Naive thymus-derived CD4-positive, alpha-beta T cell (primary cell): ENCODE measurements at regions of chr12 and their contacts with region 1.

Region 1: GRCh38 chr12:59808317-59808910 is 212.6 kb downstream of the SLC16A7 start:
- DNase-seq: peak in 6 of 9 donors; percentile 16 to 44 (median 34)
- ATAC-seq: peak; percentile 81
- H3K4me3 ChIP-seq: no peak overlapping the region
- H3K4me3 Mint-ChIP-seq: no peak overlapping the region
- H3K27ac ChIP-seq: no peak overlapping the region
- H3K27ac Mint-ChIP-seq: no peak overlapping the region
- H3K4me1 ChIP-seq: no peaks in the 10 kb centered on the region
- H3K4me1 Mint-ChIP-seq: peaks cover 0 to 5% (median 0%) of the 10 kb centered on the region in 7 donors
- H3K27me3 ChIP-seq: no peaks in the 10 kb centered on the region
- H3K27me3 Mint-ChIP-seq: no peaks in the 10 kb centered on the region

Region 2: DNA sequence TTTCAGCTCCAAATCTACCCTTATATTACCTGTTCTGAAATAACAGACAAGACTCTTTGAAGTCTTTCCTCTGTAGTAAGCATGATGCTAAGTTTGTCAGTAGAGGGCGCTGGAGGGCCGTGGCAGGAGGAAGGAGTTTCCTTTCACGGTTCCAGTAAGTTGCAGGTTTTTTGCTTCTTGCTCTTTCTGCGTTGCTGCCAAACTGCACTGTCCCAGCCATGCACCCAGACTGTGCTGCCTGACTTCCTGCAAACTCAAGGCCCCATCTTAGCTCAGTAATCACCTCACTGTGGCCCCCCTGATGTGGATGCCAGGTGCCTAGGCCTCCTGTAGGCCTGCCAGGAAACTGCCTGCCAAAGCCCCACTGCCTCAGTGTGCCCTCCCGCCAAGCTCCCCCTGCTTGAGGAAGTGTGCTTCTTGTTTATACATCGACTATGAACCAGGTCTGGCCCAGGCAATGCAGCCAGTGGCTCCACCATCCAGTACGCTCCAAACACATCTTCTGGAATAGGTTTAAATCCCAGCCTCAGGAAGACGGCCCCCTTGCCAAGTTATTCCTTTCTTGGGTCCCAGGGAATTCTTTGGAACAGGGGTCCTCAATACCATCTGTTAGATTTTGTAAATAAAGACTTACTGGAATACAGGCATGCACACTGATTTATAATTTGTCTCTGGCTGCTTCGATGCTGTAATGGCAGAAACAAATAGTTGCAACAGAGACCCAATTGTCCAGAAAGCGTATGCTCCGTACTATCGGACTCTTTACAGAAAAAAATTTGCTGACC is 694.4 kb before region 1 on chr12:
- CTCF ChIA-PET with region 1: no interaction called
- POLR2A ChIA-PET with region 1: no interaction called
- intact Hi-C with region 1: no loop called
- DNase-seq: peak in 4 of 9 donors; percentile 1 to 54 (median 8)
- ATAC-seq: no peak
- H3K4me3 ChIP-seq: no peak overlapping the region
- H3K4me3 Mint-ChIP-seq: no peak overlapping the region
- H3K27ac ChIP-seq: no peak overlapping the region
- H3K27ac Mint-ChIP-seq: no peak overlapping the region
- H3K4me1 ChIP-seq: no peaks in the 10 kb centered on the region
- H3K4me1 Mint-ChIP-seq: peaks cover 0 to 2% (median 0%) of the 10 kb centered on the region in 7 donors
- H3K27me3 ChIP-seq: no peaks in the 10 kb centered on the region
- H3K27me3 Mint-ChIP-seq: no peaks in the 10 kb centered on the region

Region 3: DNA sequence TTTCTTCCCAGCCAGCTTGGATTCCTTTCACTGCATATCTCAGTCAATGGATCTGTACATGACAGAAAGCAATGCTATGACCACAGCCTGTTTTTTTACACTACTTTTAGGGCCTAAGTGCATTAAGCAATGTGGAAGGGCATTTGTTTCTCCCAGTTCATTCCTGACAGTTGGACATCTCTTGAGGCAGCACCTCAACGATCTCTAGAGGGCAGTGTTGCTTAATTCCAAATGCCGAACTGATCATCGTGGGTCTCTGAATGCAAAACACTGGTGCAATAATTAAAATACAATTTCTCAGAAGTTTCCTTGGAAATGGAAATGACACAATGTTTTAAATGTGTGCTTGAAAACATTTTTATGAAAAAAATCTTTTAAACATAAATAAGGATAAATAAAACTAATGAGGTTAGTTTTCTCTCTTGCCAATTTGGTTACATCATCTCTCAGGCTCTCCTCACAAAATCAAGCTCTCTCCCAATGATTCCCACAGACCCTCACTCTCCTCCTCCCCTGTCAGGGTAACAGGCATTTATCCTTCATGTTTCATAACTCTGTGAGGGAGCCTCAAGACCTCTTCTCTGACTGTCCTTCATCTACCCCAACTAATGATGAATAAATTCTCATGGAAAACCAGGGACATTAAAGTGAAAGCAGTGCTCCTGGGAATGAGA is 405.0 kb before region 1 on chr12:
- CTCF ChIA-PET with region 1: interaction called, 4 read pairs
- POLR2A ChIA-PET with region 1: no interaction called
- intact Hi-C with region 1: loop called (anchors 1 to 2 kb)
- DNase-seq: peak in 7 of 9 donors; percentile 11 to 42 (median 37)
- ATAC-seq: peak; percentile 55
- H3K4me3 ChIP-seq: no peak overlapping the region
- H3K4me3 Mint-ChIP-seq: no peak overlapping the region
- H3K27ac ChIP-seq: no peak overlapping the region
- H3K27ac Mint-ChIP-seq: no peak overlapping the region
- H3K4me1 ChIP-seq: no peaks in the 10 kb centered on the region
- H3K4me1 Mint-ChIP-seq: peaks cover 0 to 12% (median 1%) of the 10 kb centered on the region in 7 donors
- H3K27me3 ChIP-seq: no peaks in the 10 kb centered on the region
- H3K27me3 Mint-ChIP-seq: peaks cover 0 to 8% (median 0%) of the 10 kb centered on the region in 5 donors

Region 4: DNA sequence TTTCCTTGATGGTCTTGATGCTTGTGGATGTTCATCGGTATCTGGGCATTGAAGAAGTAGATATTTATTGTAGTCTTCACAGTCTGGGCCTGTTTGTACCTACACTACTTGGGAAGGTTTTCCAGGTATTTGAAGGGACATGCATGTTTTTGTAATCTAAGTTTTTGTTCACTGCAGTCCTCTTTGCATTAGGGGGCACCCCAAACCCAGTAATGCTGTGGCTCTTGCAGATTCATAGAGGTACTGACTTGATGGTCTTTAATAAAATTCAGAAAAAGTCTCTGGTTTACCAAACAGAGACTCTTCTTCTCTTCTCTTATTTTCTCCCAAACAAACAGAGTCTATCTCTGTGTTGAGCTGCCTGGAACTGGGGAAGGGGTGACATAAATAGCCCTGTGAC is 363.5 kb before region 1 on chr12:
- CTCF ChIA-PET with region 1: interaction called, 7 read pairs
- POLR2A ChIA-PET with region 1: no interaction called
- intact Hi-C with region 1: loop called (anchors 1 kb)
- DNase-seq: peak in 5 of 9 donors; percentile 15 to 41 (median 26)
- ATAC-seq: no peak
- H3K4me3 ChIP-seq: no peak overlapping the region
- H3K4me3 Mint-ChIP-seq: no peak overlapping the region
- H3K27ac ChIP-seq: no peak overlapping the region
- H3K27ac Mint-ChIP-seq: no peak overlapping the region
- H3K4me1 ChIP-seq: no peaks in the 10 kb centered on the region
- H3K4me1 Mint-ChIP-seq: no peaks in the 10 kb centered on the region
- H3K27me3 ChIP-seq: no peaks in the 10 kb centered on the region
- H3K27me3 Mint-ChIP-seq: peaks cover 0 to 19% (median 9%) of the 10 kb centered on the region in 5 donors

Region 5: GRCh38 chr12:59780605-59781135 is 27.7 kb before region 1 on chr12:
- CTCF ChIA-PET with region 1: no interaction called
- POLR2A ChIA-PET with region 1: no interaction called
- intact Hi-C with region 1: no loop called
- DNase-seq: no peak
- ATAC-seq: no peak
- H3K4me3 ChIP-seq: no peak overlapping the region
- H3K4me3 Mint-ChIP-seq: no peak overlapping the region
- H3K27ac ChIP-seq: no peak overlapping the region
- H3K27ac Mint-ChIP-seq: no peak overlapping the region
- H3K4me1 ChIP-seq: no peaks in the 10 kb centered on the region
- H3K4me1 Mint-ChIP-seq: no peaks in the 10 kb centered on the region
- H3K27me3 ChIP-seq: no peaks in the 10 kb centered on the region
- H3K27me3 Mint-ChIP-seq: no peaks in the 10 kb centered on the region